Mammary epithelial cell (primary cell): ENCODE measurements at regions of chr6 and their contacts with region 1.

Region 1: GRCh38 chr6:144582939-144583613 is 297.9 kb downstream of the UTRN start:
- DNase-seq: no peak
- H3K4me3 ChIP-seq: no peak overlapping the region
- H3K27ac ChIP-seq: no peak overlapping the region
- H3K4me1 ChIP-seq: no peaks in the 10 kb centered on the region
- H3K27me3 ChIP-seq: no peaks in the 10 kb centered on the region
- CTCF ChIP-seq: no peak

Region 2: GRCh38 chr6:144931172-144932035 is 348.3 kb after region 1 on chr6:
- CTCF ChIA-PET with region 1: no interaction called
- dilution Hi-C with region 1: no loop called
- in situ Hi-C with region 1: loop called (anchors 10 kb)
- intact Hi-C with region 1: loop called (anchors 1 kb)
- DNase-seq: peak; percentile 39
- H3K4me3 ChIP-seq: no peak overlapping the region
- H3K27ac ChIP-seq: no peak overlapping the region
- H3K4me1 ChIP-seq: no peaks in the 10 kb centered on the region
- H3K27me3 ChIP-seq: no peaks in the 10 kb centered on the region
- CTCF ChIP-seq: peak; percentile 72 to 77

Region 3: GRCh38 chr6:145028144-145028818 is 445.2 kb after region 1 on chr6:
- CTCF ChIA-PET with region 1: no interaction called
- dilution Hi-C with region 1: no loop called
- in situ Hi-C with region 1: loop called in 1 of 2 experiments (anchors 25 kb)
- intact Hi-C with region 1: loop called (anchors 1 kb)
- DNase-seq: peak; percentile 45
- H3K4me3 ChIP-seq: no peak overlapping the region
- H3K27ac ChIP-seq: no peak overlapping the region
- H3K4me1 ChIP-seq: no peaks in the 10 kb centered on the region
- H3K27me3 ChIP-seq: no peaks in the 10 kb centered on the region
- CTCF ChIP-seq: peak; percentile 56 to 62

Region 4: GRCh38 chr6:145214570-145214969 is 631.5 kb after region 1 on chr6:
- CTCF ChIA-PET with region 1: no interaction called
- dilution Hi-C with region 1: no loop called
- in situ Hi-C with region 1: loop called (anchors 10 to 25 kb)
- intact Hi-C with region 1: loop called (anchors 1 kb)
- DNase-seq: peak; percentile 10
- H3K4me3 ChIP-seq: no peak overlapping the region
- H3K27ac ChIP-seq: no peak overlapping the region
- H3K4me1 ChIP-seq: no peaks in the 10 kb centered on the region
- H3K27me3 ChIP-seq: no peaks in the 10 kb centered on the region
- CTCF ChIP-seq: peak; percentile 36 to 49